ENCODE measurements at regions of chr10 and their contacts with region 1.

Region 1: DNA sequence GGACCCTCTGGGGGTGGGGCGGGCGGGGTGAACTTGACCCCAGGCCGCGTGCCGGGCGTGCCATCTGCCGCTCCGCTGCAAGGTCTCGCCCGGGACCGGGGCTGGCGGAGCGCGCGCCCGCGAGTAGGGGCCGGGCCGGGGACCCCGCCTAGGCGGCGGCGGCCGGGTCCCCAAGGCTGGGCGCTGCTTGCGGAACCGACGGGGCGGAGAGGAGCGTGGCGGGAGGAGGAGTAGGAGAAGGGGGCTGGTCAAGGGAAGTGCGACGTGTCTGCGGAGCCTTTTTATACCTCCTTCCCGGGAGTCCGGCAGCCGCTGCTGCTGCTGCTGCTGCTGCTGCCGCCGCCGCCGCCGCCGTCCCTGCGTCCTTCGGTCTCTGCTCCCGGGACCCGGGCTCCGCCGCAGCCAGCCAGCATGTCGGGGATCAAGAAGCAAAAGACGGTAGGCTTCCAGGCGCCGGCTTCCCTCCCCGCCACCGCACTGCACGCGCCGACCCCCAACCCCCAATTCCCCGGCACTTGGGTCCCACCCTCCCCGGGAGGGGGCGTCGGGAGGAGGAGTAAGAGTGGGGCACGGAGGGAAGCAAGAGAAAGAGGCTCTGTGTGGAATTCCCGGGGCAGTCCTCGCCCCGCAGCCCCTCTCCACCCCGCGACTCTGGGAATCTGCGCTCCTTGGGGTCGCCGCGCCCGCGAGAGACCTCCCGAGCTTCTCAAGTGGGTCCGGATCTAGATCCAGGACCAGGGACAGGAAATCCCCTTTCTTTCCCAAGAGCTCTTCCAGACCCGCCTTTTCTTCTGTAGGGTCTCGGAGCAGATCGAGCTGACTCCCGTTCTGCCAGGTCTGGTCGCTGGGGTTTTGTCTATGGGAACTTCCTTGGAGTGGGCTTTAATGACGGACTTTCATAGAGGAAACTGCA is at the start of gene PAPSS2:
- DNase-seq: peak; percentile 46
- H3K4me3 ChIP-seq: peak within 1 kb of the TSS; percentile 35 to 79 (median 68)
- H3K27ac ChIP-seq: no peak within 1 kb of the TSS
- H3K4me1 ChIP-seq: peaks cover 3% of the 10 kb centered on the region
- H3K27me3 ChIP-seq: no peaks in the 10 kb centered on the region
- CTCF ChIP-seq: no peak
- total RNA-seq, gene PAPSS2: 3.8 to 9.1 TPM

Region 2: DNA sequence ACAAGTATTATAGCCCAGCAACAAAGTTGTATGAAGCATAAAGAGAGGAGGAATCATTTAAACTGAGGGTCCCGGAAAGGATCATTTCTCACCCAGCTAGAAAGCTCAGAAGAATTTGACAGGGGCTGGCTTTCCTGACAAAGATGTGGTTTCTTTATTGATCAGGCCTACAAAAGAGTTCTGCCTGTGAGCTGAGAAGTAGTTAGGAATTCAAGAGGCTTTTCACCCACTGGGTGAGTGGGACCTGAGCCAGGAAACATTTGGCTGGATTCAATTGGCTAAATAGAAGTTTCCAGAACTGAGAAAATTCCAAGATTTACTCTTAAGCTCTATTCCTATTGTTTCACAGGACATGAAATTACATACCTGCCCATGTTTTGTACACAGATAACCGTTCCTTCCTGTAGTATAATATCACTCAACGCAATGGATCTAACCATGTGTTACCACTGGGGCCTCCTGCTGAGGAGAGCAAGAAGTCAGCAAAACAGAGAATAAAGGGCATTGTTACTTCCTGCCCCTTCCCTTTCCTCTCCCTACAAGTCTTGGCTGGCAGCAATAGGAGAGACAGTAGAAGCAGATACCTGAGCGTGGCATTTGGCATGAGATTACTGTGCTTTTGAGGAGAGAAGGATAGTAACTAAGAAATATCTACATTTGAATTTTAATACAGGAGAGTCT is 54.1 kb before region 1 on chr10:
- CTCF ChIA-PET with region 1: no interaction called
- dilution Hi-C with region 1: loop called (anchors 5 kb)
- in situ Hi-C with region 1: no loop called
- intact Hi-C with region 1: no loop called
- DNase-seq: peak; percentile 38
- H3K4me3 ChIP-seq: no peak overlapping the region
- H3K27ac ChIP-seq: no peak overlapping the region
- H3K4me1 ChIP-seq: peaks cover 10% of the 10 kb centered on the region
- H3K27me3 ChIP-seq: no peaks in the 10 kb centered on the region
- CTCF ChIP-seq: no peak

Region 3: GRCh38 chr10:87771871-87772500 is 112.2 kb after region 1 on chr10:
- CTCF ChIA-PET with region 1: no interaction called
- dilution Hi-C with region 1: no loop called
- in situ Hi-C with region 1: no loop called
- intact Hi-C with region 1: loop called (anchors 1 kb)
- DNase-seq: peak; percentile 15
- H3K4me3 ChIP-seq: no peak overlapping the region
- H3K27ac ChIP-seq: no peak overlapping the region
- H3K4me1 ChIP-seq: peaks cover 5% of the 10 kb centered on the region
- H3K27me3 ChIP-seq: no peaks in the 10 kb centered on the region
- CTCF ChIP-seq: peak; percentile 43 to 54

Region 4: GRCh38 chr10:87991946-87992345 is 332.1 kb after region 1 on chr10:
- CTCF ChIA-PET with region 1: no interaction called
- dilution Hi-C with region 1: no loop called
- in situ Hi-C with region 1: no loop called
- intact Hi-C with region 1: no loop called
- DNase-seq: no peak
- H3K4me3 ChIP-seq: no peak overlapping the region
- H3K27ac ChIP-seq: no peak overlapping the region
- H3K4me1 ChIP-seq: no peaks in the 10 kb centered on the region
- H3K27me3 ChIP-seq: no peaks in the 10 kb centered on the region
- CTCF ChIP-seq: no peak